ENCODE measurements at regions of chr12 and their contacts with region 1.

Region 1: DNA sequence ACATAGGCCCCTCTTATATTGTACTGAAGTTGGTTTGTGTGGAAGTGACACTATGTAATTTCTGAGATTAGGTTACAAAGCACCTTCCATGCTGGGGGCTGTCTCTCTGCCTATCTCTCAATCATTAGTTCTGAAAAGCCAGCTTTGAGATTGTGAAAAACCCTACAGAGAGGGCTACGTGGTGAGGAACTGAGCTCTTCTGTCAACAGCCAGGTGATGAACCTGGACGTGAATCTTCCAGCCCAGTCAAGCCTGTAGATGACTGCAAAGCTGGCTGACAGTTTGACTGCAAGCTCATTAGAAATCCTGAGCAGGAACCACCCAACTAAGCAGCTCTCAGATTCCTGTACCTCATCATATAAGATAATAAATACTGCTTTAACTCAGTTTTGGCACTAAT is 36.3 kb upstream of the BBS10 start:
- DNase-seq: no peak

Region 2: DNA sequence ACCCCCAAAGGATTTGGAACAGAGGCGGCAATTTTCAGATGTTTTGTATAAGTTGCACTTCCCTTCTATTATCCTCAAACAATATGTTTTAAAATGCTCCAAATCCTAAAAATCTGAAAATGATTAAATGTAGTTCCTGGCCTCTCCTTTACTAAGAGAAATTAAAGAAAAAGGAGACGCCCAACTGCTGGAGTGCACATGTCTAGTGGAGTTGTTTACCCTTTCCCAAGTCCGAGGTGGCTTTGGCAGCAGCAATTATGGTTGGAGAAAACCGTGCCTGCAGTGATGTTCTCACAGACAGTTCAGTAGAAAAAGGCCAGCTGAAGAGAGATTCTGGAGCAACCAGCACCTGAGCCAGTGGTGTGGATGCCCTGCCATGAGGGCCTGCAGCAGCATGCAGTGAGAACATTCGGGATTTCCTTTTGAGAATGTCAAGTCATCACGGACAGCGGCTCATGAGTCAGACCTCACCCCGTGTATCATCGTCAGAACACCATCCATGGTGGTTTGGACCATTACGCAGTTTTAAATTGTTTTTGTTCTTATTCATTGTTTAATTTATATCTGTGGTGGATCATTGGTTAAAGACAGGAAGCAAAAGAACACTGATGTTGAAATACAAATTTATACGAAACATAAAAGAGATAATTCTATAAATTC is 694.1 kb before region 1 on chr12:
- intact Hi-C with region 1: no loop called
- DNase-seq: no peak

Region 3: DNA sequence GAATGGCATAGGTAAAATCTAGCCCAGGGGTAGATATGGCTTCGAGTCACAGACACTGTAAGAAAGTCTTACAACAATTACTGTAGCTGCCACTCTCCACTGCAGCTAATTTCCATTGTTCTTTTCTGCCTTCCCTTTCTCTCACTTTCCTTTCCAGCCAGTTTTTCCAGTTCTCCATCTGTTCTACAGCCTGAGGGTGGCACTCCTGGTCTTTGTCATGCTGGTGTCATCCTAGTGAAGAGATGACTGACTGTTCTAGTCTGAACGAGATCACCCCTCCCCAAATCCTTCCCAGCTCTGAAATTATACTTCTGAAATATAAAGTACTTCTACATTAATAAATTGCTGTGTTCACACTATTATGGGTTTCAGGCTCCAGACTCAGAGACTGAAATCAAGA is 568.4 kb after region 1 on chr12:
- intact Hi-C with region 1: loop called in 1 of 2 experiments (anchors 5 kb)
- DNase-seq: no peak

Region 4: GRCh38 chr12:77830583-77831351 is 1446.2 kb after region 1 on chr12 and contains the start of gene NAV3:
- intact Hi-C with region 1: no loop called
- DNase-seq: no peak
- total RNA-seq, gene NAV3: 13.6 to 17.4 TPM

Measured in posterior vena cava (tissue), 2 donors.